Psoas muscle (tissue), 8 donors: ENCODE measurements at regions of chr4 and their contacts with region 1.

Region 1: DNA sequence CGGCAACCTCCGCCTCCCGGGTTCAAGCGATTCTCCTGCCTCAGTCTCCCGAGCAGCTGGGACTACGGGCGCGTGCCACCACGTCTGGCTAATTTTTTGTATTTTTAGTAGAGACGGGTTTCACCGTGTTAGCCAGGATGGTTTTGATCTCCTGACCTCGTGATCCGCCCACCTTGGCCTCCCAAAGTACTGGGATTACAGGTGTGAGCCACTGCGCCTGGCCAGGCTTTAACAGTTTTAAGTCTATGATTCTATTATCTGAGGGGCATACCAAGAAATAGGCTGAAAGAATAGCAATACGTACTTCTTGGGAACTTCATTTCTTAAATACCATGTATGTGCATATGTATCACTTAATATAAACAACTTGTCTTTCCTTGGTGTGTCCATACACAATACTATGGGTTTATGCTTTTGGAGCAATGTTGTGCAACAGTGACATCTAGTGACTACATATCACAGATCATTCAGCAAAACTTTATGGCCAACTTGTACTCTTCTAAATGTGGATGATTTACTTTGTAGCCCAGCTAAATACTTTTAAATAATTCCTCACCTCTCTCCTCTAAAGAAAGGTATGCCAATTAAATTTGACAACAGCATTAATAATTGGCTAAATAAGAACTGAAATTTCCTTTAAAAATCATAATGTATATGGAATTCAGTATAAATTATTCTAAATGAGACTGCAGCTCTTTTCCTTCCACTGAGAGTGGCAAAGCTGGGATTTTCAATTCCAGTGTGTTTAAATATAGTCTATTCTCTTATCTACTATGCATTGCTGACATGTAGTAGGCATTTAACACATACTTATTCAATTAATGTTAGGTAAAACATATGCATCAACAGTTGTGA is 10.4 kb downstream of the SLC9B1 start:
- DNase-seq: no peak
- ATAC-seq: peak; percentile 77 to 92 (median 82)
- H3K4me3 ChIP-seq: no peak overlapping the region
- H3K27ac ChIP-seq: no peak overlapping the region
- H3K4me1 ChIP-seq: peaks cover 14% of the 10 kb centered on the region
- H3K27me3 ChIP-seq: no peaks in the 10 kb centered on the region
- CTCF ChIP-seq: peak; percentile 78

Region 2: DNA sequence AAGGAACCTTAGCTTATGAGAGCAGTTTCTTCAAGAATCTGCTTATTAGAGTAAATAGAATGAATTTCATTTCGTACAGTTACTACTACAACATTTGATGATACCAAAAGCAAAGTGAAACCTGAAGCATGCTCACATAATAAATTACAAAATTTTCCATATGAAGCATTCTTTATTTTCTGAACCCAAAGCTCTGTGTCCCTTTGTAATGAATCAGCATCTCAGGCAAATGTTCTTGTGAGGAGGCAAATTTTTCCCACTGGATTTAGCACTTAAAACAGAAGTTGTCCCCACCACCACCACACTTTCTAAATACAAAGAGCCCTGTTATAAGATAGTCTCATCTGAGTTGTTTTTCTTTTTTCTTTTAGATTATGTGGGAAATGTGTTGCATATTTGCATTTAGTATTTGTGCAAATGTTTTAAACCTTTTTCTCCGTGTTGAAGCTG is 578.6 kb before region 1 on chr4:
- intact Hi-C with region 1: loop called in 1 of 2 experiments (anchors 5 kb)
- DNase-seq: no peak
- ATAC-seq: no peak
- H3K4me3 ChIP-seq: peak overlapping the region; percentile 70
- H3K27ac ChIP-seq: peak overlapping the region; percentile 58
- H3K4me1 ChIP-seq: no peaks in the 10 kb centered on the region
- H3K27me3 ChIP-seq: no peaks in the 10 kb centered on the region
- CTCF ChIP-seq: no peak

Region 3: DNA sequence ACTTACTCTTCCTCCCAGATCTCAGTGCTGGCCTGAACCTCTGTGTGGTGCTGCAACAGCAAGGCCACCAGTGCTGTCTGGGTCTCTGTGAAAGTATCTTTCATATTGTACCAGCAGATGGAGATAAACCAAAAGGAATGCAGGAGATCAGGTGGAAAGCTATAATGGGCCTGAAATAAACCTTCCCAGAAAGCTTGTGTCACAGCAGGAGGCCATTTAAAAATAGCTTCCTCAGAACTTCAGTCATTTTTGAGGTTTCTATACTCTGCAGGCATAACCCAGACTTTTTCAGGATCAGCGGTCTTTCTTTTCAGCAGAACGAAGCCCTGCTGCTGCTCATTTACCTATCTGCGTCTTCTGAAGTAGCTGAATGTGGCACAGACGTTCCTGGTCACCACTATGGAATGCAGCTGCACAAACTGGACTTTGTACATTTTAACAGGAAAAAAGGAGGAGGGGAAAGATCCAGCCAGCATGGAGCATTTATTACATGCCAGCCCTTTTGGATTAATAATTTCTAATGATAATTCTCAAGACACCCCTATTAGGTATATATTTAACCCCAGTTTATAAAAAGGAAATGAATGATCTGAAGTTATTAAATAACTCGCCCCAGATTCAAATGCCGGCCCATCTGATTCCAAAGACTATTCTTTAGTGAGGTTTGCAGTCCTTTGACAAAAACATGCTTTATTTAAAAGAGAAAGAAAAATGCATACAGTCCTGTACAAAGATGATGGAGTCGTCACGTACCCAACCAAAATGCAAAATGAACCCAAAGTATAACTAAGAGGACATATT is 388.2 kb before region 1 on chr4:
- intact Hi-C with region 1: loop called in 1 of 2 experiments (anchors 1 kb)
- DNase-seq: no peak
- ATAC-seq: peak; percentile 92 to 96 (median 93)
- H3K4me3 ChIP-seq: peak overlapping the region; percentile 16
- H3K27ac ChIP-seq: no peak overlapping the region
- H3K4me1 ChIP-seq: peaks cover 8% of the 10 kb centered on the region
- H3K27me3 ChIP-seq: no peaks in the 10 kb centered on the region
- CTCF ChIP-seq: peak; percentile 62